A673 (cell line): ENCODE measurements at regions of chr2 and their contacts with region 1.

Region 1: DNA sequence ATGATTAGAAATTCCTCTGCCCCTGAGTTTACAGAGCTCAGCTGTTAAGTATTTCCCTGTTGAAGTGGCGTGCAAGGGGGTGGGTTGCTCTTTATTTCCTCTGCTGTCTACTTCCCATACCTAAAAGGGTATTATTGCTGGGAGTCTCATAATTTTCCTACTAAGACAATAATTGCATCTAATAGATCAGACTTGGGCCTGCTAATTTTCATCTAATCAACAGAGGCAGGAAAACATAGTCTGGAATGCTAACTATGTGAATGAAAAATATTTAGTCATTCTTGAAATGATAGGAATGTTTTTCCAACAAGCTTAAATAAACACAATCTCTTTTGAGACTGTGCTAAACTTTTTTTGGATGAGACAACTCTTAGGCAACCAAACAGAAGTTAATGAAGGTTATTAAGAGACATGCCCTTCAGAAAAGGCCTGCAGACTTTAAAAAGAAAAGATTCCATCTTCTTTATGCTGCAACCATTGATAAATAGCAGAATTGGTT is 111.4 kb downstream of the FEZ2 start:
- DNase-seq: peak; percentile 26
- H3K4me3 ChIP-seq: no peak overlapping the region
- H3K27ac ChIP-seq: peak overlapping the region; percentile 38
- H3K4me1 ChIP-seq: peaks cover 36% of the 10 kb centered on the region
- H3K27me3 ChIP-seq: no peaks in the 10 kb centered on the region
- CTCF ChIP-seq: no peak

Region 2: GRCh38 chr2:36550006-36550405 is 63.4 kb after region 1 on chr2:
- CTCF ChIA-PET with region 1: no interaction called
- POLR2A ChIA-PET with region 1: interaction called, 11 read pairs
- intact Hi-C with region 1: no loop called
- DNase-seq: no peak
- H3K4me3 ChIP-seq: no peak overlapping the region
- H3K27ac ChIP-seq: no peak overlapping the region
- H3K4me1 ChIP-seq: no peaks in the 10 kb centered on the region
- H3K27me3 ChIP-seq: no peaks in the 10 kb centered on the region
- CTCF ChIP-seq: no peak